CD8-positive, alpha-beta memory T cell (primary cell): ENCODE measurements at regions of chr3 and their contacts with region 1.

Region 1: DNA sequence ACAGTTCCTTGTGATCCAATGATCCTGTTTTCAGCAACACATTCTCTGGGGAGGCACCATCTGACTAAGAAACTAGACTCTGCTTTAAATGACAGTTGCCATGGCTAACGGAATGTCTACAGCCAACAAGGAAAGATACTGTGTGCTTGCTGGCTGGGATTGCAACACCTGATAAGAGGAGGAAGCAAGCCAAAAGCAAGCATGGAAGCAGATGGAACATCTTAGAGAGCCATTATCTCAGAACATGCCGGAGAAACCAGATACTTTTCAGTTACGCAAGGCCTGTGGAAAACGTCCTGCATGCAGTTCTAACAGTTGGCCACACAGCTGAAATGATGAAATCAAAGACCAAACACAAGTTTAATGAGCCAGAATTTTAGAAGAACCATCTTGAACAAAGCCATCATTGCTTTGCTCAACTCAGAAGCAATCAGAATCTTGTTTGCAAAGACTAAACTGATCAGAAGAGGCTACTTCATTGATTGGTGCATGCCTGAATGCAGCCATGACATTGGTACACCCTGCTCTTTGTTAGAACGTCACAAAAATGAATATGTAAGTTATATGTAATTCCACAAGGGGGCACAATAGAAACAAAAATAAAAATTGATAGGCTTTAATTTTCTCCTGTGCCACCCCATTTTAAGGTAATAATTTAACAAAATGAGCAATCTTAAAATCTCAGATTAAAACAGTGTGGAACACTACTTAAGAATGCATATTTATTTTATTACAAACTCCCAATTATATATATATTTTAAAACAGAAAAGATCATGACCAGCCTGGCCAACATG is 50.8 kb downstream of the GXYLT2 start:
- DNase-seq: peak in 3 of 5 donors; percentile 46 to 58 (median 50)
- H3K4me3 ChIP-seq: no peak overlapping the region
- H3K4me3 Mint-ChIP-seq: no peak overlapping the region
- H3K27ac ChIP-seq: no peak overlapping the region
- H3K27ac Mint-ChIP-seq: no peak overlapping the region
- H3K4me1 ChIP-seq: no peaks in the 10 kb centered on the region
- H3K4me1 Mint-ChIP-seq: peaks cover 0 to 4% (median 0%) of the 10 kb centered on the region in 3 donors
- H3K27me3 ChIP-seq: no peaks in the 10 kb centered on the region
- H3K27me3 Mint-ChIP-seq: peaks cover 4 to 13% of the 10 kb centered on the region in 2 donors

Region 2: DNA sequence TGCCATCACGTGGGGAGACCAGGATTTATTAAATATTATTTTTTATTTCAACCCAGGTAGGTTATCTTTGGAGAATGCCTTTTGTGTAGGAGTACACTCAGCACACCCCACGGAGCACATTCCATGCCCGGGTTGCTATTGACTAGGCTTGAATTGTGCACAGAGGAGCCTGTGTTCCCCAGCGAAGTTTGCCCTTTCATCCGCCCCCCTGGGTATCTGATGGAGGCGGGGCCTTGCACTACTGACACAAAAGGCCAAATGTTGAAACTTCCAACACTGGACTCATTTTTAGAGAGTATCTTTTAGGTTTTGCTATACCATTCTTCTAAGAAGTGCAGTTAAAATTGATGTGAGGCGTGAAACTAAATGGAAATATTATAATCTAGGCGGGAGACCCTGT is 18.6 kb after region 1 on chr3:
- CTCF ChIA-PET with region 1: no interaction called
- POLR2A ChIA-PET with region 1: no interaction called
- DNase-seq: no peak
- H3K4me3 ChIP-seq: no peak overlapping the region
- H3K4me3 Mint-ChIP-seq: no peak overlapping the region
- H3K27ac ChIP-seq: no peak overlapping the region
- H3K27ac Mint-ChIP-seq: no peak overlapping the region
- H3K4me1 ChIP-seq: no peaks in the 10 kb centered on the region
- H3K4me1 Mint-ChIP-seq: peaks cover 5 to 23% (median 15%) of the 10 kb centered on the region in 3 donors
- H3K27me3 ChIP-seq: no peaks in the 10 kb centered on the region
- H3K27me3 Mint-ChIP-seq: peaks cover 0 to 3% of the 10 kb centered on the region in 2 donors

Region 3: GRCh38 chr3:73056014-73056844 is 117.6 kb after region 1 on chr3:
- CTCF ChIA-PET with region 1: interaction called, 27 read pairs
- POLR2A ChIA-PET with region 1: no interaction called
- DNase-seq: peak in 2 of 5 donors; percentile 15 to 25
- H3K4me3 ChIP-seq: no peak overlapping the region
- H3K4me3 Mint-ChIP-seq: no peak overlapping the region
- H3K27ac ChIP-seq: no peak overlapping the region
- H3K27ac Mint-ChIP-seq: peak overlapping the region in 5 of 8 donors; percentile 6 to 83 (median 24)
- H3K4me1 ChIP-seq: peaks cover 3% of the 10 kb centered on the region
- H3K4me1 Mint-ChIP-seq: peaks cover 17 to 45% (median 44%) of the 10 kb centered on the region in 3 donors
- H3K27me3 ChIP-seq: no peaks in the 10 kb centered on the region
- H3K27me3 Mint-ChIP-seq: no peaks in the 10 kb centered on the region

Region 4: GRCh38 chr3:73086071-73086494 is 147.4 kb after region 1 on chr3:
- CTCF ChIA-PET with region 1: interaction called, 23 read pairs
- POLR2A ChIA-PET with region 1: no interaction called
- DNase-seq: peak; percentile 16 to 58 (median 32)
- H3K4me3 ChIP-seq: no peak overlapping the region
- H3K4me3 Mint-ChIP-seq: peak overlapping the region in 5 of 7 donors; percentile 32 to 61 (median 43)
- H3K27ac ChIP-seq: no peak overlapping the region
- H3K27ac Mint-ChIP-seq: no peak overlapping the region
- H3K4me1 ChIP-seq: peaks cover 5% of the 10 kb centered on the region
- H3K4me1 Mint-ChIP-seq: peaks cover 7 to 9% (median 9%) of the 10 kb centered on the region in 3 donors
- H3K27me3 ChIP-seq: no peaks in the 10 kb centered on the region
- H3K27me3 Mint-ChIP-seq: peaks cover 5% of the 10 kb centered on the region in 2 donors

Region 5: DNA sequence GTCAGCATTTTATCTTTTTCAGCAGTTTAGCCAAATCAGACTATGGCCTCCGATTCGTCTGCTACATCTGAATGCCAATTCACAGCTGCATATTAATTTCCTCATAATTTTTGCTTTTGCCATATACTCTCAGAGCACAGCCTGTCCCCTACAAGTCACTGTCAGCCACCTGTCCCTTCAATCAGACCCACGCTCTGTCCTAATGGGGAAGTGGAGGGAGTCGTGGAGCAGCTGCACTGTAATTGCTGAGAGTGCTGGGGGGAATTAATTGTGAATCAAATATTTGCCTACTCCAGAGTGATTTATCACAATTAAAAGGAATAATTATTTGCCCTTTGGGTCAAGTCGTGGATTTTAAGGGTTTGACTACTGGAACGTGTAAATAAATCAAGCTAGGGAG is 198.3 kb after region 1 on chr3:
- CTCF ChIA-PET with region 1: no interaction called
- POLR2A ChIA-PET with region 1: no interaction called
- DNase-seq: no peak
- H3K4me3 ChIP-seq: no peak overlapping the region
- H3K4me3 Mint-ChIP-seq: no peak overlapping the region
- H3K27ac ChIP-seq: no peak overlapping the region
- H3K27ac Mint-ChIP-seq: no peak overlapping the region
- H3K4me1 ChIP-seq: no peaks in the 10 kb centered on the region
- H3K4me1 Mint-ChIP-seq: no peaks in the 10 kb centered on the region
- H3K27me3 ChIP-seq: no peaks in the 10 kb centered on the region
- H3K27me3 Mint-ChIP-seq: peaks cover 15 to 22% of the 10 kb centered on the region in 2 donors

Region 6: GRCh38 chr3:73432023-73432705 is 493.5 kb after region 1 on chr3:
- CTCF ChIA-PET with region 1: no interaction called
- POLR2A ChIA-PET with region 1: no interaction called
- DNase-seq: peak in 1 of 5 donors; percentile 2
- H3K4me3 ChIP-seq: no peak overlapping the region
- H3K4me3 Mint-ChIP-seq: no peak overlapping the region
- H3K27ac ChIP-seq: no peak overlapping the region
- H3K27ac Mint-ChIP-seq: no peak overlapping the region
- H3K4me1 ChIP-seq: no peaks in the 10 kb centered on the region
- H3K4me1 Mint-ChIP-seq: no peaks in the 10 kb centered on the region
- H3K27me3 ChIP-seq: no peaks in the 10 kb centered on the region
- H3K27me3 Mint-ChIP-seq: peaks cover 0 to 1% of the 10 kb centered on the region in 2 donors